ENCODE measurements at regions of chr20 and their contacts with region 1.

Region 1: GRCh38 chr20:46681032-46681854 is 8.0 kb downstream of the TP53RK start:
- DNase-seq: peak; percentile 35 to 56 (median 51)
- H3K4me3 ChIP-seq: no peak overlapping the region
- H3K4me3 Mint-ChIP-seq: no peak overlapping the region
- H3K27ac ChIP-seq: no peak overlapping the region
- H3K27ac Mint-ChIP-seq: peak overlapping the region in 1 of 7 donors; percentile 37
- H3K4me1 ChIP-seq: no peaks in the 10 kb centered on the region
- H3K4me1 Mint-ChIP-seq: peaks cover 27% of the 10 kb centered on the region
- H3K27me3 ChIP-seq: no peaks in the 10 kb centered on the region
- H3K27me3 Mint-ChIP-seq: peaks cover 2 to 4% (median 4%) of the 10 kb centered on the region in 3 donors
- CTCF ChIP-seq: peak; percentile 87

Region 2: GRCh38 chr20:46520976-46521579 is 160.2 kb before region 1 on chr20:
- intact Hi-C with region 1: loop called (anchors 1 to 2 kb)
- DNase-seq: peak; percentile 23 to 60 (median 54)
- H3K4me3 ChIP-seq: no peak overlapping the region
- H3K4me3 Mint-ChIP-seq: no peak overlapping the region
- H3K27ac ChIP-seq: no peak overlapping the region
- H3K27ac Mint-ChIP-seq: no peak overlapping the region
- H3K4me1 ChIP-seq: no peaks in the 10 kb centered on the region
- H3K4me1 Mint-ChIP-seq: peaks cover 2% of the 10 kb centered on the region
- H3K27me3 ChIP-seq: no peaks in the 10 kb centered on the region
- H3K27me3 Mint-ChIP-seq: peaks cover 2 to 8% (median 4%) of the 10 kb centered on the region in 3 donors
- CTCF ChIP-seq: peak; percentile 78